K562 (cell line): ENCODE measurements at regions of chr5 and their contacts with region 1.

Region 1: DNA sequence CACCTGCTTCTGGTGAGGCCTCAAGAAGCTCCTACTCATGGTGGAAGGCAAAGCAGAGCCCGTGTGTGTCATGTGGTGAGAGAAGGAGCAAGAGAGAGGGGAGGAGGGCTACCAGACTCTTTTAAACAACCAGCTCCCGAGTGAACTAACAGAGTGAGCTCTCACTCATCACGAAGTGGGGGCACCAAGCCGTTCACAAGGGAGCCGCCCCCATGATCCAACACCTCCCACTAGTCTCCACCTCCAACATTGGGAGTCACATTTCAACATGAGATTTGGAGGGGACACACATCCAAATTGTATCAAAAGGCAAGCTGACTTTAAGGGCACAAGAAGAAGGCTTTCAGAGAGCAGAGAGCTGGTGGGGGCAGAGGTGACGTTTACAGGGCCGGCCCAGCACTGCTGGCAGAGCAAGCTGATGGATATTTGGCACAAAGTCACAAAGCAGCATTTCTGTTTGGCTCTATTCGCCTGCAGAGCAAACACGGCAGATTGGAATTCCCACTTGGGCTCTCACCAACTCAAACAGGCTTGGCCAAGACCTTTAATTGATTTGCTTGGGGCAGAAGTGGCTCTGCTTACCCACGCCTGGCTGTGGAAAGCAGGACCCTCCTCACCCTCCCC is 20.0 kb downstream of the PITX1 start:
- DNase-seq: no peak
- ATAC-seq: no peak
- H3K4me3 ChIP-seq: no peak overlapping the region
- H3K27ac ChIP-seq: no peak overlapping the region
- H3K4me1 ChIP-seq: peaks cover 3 to 5% of the 10 kb centered on the region in 2 experiments; a peak in 2 of 5 replicates
- H3K27me3 ChIP-seq: no peaks in the 10 kb centered on the region
- CTCF ChIP-seq: no peak
- EP300 ChIP-seq: no peak
- POLR2A ChIP-seq: no peak
- RAD21 ChIP-seq: no peak

Region 2: DNA sequence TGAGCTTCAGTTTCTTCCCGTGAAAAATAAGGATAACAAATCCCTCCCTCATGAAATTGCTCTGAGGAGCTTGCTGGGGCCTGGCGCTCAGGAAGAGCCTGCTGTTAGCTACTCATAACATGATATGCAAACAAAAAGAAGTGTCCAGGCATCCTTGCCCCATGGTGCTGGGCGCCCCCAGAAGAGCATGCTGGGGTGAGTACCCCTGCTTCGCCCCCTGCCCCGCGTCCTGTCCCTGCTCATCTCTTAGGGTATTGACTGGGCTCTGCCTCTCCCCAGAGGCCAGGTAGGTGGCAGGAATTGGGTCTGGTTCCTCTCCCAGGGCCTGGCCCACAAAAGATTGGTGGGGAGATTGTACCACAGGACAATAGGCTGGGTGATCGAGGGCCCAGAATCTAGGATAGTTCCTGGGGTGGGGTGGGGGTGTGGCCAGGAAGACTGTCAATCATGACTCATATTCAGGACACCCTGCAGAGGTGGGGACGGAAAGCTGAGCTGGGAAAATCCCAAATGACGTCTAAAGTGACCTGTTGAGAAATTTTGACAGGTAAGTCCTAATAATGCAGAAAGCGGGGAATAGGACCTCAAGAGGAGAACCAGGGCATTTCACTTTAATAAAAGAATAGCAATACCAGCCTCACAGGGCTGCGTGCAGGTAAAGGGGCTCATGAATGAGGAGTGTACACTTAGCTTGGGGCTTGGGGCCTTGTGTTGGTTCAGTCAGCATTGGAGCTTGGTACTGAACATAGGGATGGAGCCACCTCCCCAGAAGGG is 11.1 kb after region 1 on chr5:
- CTCF ChIA-PET with region 1: no interaction called
- POLR2A ChIA-PET with region 1: interaction called, 35 read pairs
- in situ Hi-C with region 1: no loop called
- intact Hi-C with region 1: no loop called
- DNase-seq: peak; percentile 59 to 78 (median 62)
- ATAC-seq: peak; percentile 76
- H3K4me3 ChIP-seq: no peak overlapping the region
- H3K27ac ChIP-seq: no peak overlapping the region
- H3K4me1 ChIP-seq: peaks cover 7 to 42% of the 10 kb centered on the region in 2 experiments; a peak in 4 of 5 replicates
- H3K27me3 ChIP-seq: no peaks in the 10 kb centered on the region
- CTCF ChIP-seq: no peak
- EP300 ChIP-seq: no peak
- POLR2A ChIP-seq: no peak
- RAD21 ChIP-seq: no peak

Region 3: DNA sequence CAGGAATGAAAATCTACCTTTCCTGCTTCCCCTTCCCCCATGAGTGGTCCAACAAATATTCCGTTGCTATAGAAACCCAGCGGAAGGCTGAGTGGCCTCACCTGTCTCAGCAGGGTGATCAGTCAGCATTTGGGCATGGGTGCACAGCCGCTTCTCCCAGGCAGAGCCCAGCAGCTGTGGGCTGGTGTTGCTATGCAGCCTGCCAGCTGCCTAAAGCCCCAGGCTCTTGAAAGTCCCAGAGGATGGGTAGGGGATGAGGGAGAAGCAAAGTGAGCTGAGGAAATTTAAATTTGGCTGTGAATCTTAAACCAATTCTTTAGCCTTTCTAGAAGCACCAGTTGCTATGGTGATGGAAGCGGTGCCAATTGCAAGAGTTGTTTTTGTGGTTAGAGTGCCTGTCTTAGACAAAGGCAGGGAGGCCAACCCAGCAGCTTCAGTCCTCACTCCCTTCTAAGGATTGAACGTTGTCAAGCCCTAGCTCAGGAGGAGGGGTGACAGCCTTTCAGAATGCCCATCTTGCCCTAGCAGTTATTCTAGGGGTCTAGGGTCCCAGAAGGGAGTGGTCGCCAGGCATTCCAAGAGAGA is 171.5 kb after region 1 on chr5:
- CTCF ChIA-PET with region 1: interaction called, 5 read pairs
- POLR2A ChIA-PET with region 1: interaction called, 3 read pairs
- in situ Hi-C with region 1: no loop called
- intact Hi-C with region 1: loop called (anchors 10 kb)
- DNase-seq: no peak
- ATAC-seq: no peak
- H3K4me3 ChIP-seq: no peak overlapping the region
- H3K27ac ChIP-seq: no peak overlapping the region
- H3K4me1 ChIP-seq: peaks cover 10 to 15% of the 10 kb centered on the region in 2 experiments; a peak in 4 of 5 replicates
- H3K27me3 ChIP-seq: no peaks in the 10 kb centered on the region
- CTCF ChIP-seq: no peak
- EP300 ChIP-seq: no peak
- POLR2A ChIP-seq: no peak
- RAD21 ChIP-seq: no peak

Region 4: DNA sequence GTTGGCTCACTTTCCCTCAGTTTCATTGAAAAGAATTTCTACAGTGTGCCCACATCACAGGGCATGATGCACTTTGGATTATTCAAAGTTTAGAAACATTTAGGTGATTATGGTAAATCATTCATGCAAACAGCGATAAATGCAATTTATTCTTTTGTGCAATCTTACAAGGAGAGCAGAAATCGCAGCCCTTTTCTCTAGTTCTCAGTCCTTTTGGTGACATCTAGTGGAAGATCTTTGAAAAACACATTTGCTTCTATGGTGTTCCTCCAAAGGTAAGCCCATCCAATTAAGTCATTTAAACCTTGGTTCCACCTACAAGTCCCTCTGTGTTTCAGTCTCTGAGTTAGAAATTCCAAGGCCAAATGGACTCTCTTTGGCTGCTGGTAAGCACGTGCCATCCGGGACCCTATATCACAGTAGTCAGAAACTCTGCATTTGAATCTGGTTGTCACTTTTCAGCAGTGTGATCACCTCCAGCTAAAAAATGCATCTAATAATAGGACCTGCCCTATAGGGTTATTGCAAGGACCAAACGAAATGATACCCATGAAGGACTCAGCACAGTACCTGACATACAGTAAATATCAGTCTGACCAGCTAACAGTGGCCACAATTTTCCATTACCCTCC is 318.6 kb after region 1 on chr5:
- CTCF ChIA-PET with region 1: no interaction called
- POLR2A ChIA-PET with region 1: interaction called, 3 read pairs
- in situ Hi-C with region 1: loop called (anchors 10 kb)
- intact Hi-C with region 1: loop called (anchors 10 kb)
- DNase-seq: peak; percentile 67 to 75 (median 71)
- ATAC-seq: peak; percentile 74
- H3K4me3 ChIP-seq: no peak overlapping the region
- H3K27ac ChIP-seq: no peak overlapping the region
- H3K4me1 ChIP-seq: no peaks in the 10 kb centered on the region; a peak in 1 of 5 replicates
- H3K27me3 ChIP-seq: no peaks in the 10 kb centered on the region
- CTCF ChIP-seq: peak; percentile 49 to 81 (median 66); a peak in 5 of 6 replicates
- EP300 ChIP-seq: no peak
- POLR2A ChIP-seq: no peak
- RAD21 ChIP-seq: peak; percentile 79 to 90